ENCODE measurements at regions of chr5 and their contacts with region 1.

Region 1: DNA sequence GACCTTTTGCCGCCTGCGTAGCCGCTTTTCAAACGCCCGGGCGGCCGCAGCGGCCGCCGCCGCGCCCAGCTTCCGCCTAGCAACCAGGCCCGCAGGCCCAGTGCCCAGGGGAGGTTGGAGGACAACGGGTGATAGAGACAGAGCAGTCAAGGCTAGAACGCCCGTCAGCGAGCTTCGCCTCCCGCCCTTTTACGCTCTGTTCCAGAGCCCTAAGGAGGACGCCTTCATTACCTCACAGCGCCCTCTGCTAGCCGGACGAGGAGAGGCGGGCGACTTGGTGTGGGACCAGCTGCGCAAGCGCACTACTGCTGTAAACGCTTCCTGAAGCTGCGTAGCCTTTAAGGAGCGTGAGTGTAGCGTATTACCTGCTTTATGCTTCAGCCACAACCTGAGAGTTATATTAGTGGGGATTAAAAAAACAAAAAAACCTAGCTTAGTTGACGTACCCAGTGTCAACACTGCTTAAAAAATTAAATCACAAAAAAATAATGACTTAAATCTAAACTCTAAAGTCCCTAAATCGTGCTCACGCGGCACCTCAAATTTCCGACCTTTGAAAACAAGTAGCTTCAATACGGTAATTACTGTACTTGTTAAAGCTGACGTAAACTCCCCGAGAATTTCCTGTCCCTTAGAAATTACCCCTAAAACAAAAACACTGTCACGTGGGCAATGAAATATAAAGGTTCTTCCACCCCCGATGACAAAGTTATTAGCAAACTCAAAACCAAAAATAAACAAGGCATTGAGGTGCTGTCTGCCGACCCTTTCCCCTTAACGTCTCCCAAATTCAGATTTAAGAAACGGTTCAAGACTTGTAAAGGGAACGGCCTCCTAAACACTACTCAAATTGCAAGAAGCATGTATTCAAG is at the start of gene CEP120:
- DNase-seq: peak; percentile 97 to 100 (median 98)

Region 2: DNA sequence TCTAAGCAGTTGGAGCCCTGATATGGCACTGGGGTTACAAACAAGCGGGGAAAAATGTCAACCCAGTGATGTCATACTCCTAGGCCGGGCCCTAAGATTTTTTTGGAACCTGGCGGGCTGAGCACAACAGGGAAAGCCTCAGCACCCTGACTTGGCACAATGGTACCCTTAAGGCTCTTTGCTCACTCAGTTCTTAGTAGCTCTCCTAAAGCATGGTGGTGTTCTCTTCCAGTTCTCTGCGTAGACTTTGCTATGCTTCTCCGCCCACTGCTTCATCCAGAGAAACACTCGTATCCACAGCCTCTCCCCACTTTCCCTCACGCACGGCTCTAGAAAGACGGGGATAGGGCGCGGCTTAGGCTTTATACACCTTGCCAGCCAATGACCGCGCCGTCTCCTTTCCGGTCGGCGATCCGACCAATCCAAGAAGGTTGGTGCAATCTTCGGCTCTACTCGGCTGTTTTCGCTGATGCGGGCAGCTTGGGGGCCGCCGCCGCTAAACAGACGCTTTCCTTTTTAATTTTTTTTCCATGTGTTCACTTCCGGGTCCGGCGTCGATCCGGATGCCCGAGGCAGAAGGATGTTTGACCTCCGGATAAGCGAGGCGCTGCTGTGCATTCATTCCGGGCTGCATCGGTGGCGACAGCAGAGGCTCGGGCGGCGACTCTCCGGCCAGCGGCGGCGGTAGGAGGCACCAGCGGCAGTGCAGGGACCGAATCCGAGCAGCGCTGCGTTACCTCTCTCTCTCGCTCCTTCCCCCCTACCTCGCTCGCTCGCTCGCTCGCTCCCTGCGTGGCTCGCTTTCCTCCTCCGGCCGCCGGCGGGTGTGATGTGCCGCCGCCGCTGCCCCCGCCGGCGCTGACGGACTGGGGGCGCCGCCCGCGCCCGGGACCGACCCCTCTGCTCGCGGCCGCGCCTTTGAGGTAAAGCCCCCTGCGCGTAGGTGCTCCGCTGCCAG is 88.4 kb after region 1 on chr5 and contains the start of gene CSNK1G3:
- intact Hi-C with region 1: loop called (anchors 2 kb)
- DNase-seq: peak; percentile 88 to 99 (median 96)

Region 3: GRCh38 chr5:123585871-123586270 is 162.4 kb after region 1 on chr5:
- intact Hi-C with region 1: no loop called
- DNase-seq: no peak

Region 4: GRCh38 chr5:123598028-123598689 is 174.6 kb after region 1 on chr5:
- intact Hi-C with region 1: no loop called
- DNase-seq: no peak

Region 5: DNA sequence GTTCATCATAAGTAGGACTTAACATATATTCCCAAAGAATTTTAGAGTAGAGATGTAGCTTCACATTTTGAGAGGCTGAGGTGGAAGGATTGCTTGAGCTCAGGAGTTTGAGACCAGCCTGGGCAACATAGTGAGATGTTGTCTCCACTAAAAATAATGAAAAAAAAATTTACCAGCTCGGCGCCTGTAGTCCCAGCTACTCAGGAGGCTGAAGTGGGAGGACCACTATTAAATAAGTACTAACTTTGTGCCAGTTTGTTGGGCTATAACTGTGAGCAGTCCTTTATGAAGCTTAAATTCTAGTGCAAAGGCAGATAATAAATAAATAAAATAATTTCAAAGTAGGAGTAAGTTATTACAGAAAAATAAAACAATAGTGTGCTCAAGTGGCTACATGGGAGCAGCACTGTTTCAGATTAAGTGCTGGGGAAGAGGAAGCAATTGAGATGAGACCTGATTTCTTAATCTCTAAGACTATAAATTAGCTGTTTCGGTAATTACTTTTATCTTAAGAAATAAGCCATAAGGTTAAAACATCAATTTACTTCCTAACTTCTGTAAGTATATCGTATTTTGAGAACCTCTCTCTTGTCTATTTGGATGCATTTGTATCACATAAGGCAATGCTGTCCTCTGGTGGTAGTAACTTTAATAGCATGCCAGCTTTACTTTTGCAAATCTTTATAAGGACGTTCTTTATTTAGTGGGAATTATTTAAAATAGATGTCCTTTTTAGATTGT is 187.3 kb after region 1 on chr5:
- intact Hi-C with region 1: loop called (anchors 1 kb)
- DNase-seq: no peak

Measured in posterior cingulate gyrus (tissue), 11 donors.